SK-N-SH (cell line): ENCODE measurements at regions of chr1 and their contacts with region 1.

Region 1: GRCh38 chr1:226589008-226589733 is 40.6 kb downstream of the STUM start:
- DNase-seq: no peak
- H3K4me3 ChIP-seq: no peak overlapping the region
- H3K27ac ChIP-seq: no peak overlapping the region
- H3K4me1 ChIP-seq: peaks cover 0 to 2% of the 10 kb centered on the region in 2 experiments; a peak in 1 of 4 replicates
- H3K27me3 ChIP-seq: no peaks in the 10 kb centered on the region; the same call in 1 of the 2 replicates
- CTCF ChIP-seq: no peak
- EP300 ChIP-seq: no peak
- RAD21 ChIP-seq: no peak

Region 2: GRCh38 chr1:226325178-226325577 is 264.0 kb before region 1 on chr1:
- CTCF ChIA-PET with region 1: no interaction called
- POLR2A ChIA-PET with region 1: no interaction called
- DNase-seq: no peak
- H3K4me3 ChIP-seq: no peak overlapping the region
- H3K27ac ChIP-seq: no peak overlapping the region
- H3K4me1 ChIP-seq: no peaks in the 10 kb centered on the region
- H3K27me3 ChIP-seq: no peaks in the 10 kb centered on the region
- CTCF ChIP-seq: no peak
- EP300 ChIP-seq: no peak
- RAD21 ChIP-seq: no peak

Region 3: GRCh38 chr1:226487921-226488546 is 101.1 kb before region 1 on chr1:
- CTCF ChIA-PET with region 1: no interaction called
- POLR2A ChIA-PET with region 1: no interaction called
- DNase-seq: no peak
- H3K4me3 ChIP-seq: no peak overlapping the region
- H3K27ac ChIP-seq: no peak overlapping the region
- H3K4me1 ChIP-seq: peaks cover 0 to 5% of the 10 kb centered on the region in 2 experiments; a peak in 1 of 4 replicates
- H3K27me3 ChIP-seq: peaks cover 8% of the 10 kb centered on the region; the same call in 1 of the 2 replicates
- CTCF ChIP-seq: no peak
- EP300 ChIP-seq: no peak
- RAD21 ChIP-seq: no peak

Region 4: GRCh38 chr1:226608699-226609505 is 19.7 kb after region 1 on chr1:
- CTCF ChIA-PET with region 1: interaction called, 11 read pairs
- POLR2A ChIA-PET with region 1: no interaction called
- DNase-seq: peak; percentile 84
- H3K4me3 ChIP-seq: no peak overlapping the region; a peak in 1 of 4 replicates
- H3K27ac ChIP-seq: no peak overlapping the region
- H3K4me1 ChIP-seq: no peaks in the 10 kb centered on the region; a peak in 1 of 4 replicates
- H3K27me3 ChIP-seq: no peaks in the 10 kb centered on the region; the same call in 1 of the 2 replicates
- CTCF ChIP-seq: peak; percentile 81
- EP300 ChIP-seq: no peak
- RAD21 ChIP-seq: peak; percentile 65